ENCODE measurements at regions of chr15 and their contacts with region 1.

Region 1: GRCh38 chr15:70863450-70864218 is 9.7 kb upstream of the LARP6 start:
- DNase-seq: no peak
- H3K4me3 ChIP-seq: no peak overlapping the region
- H3K27ac ChIP-seq: no peak overlapping the region
- H3K4me1 ChIP-seq: peaks cover 10% of the 10 kb centered on the region
- H3K27me3 ChIP-seq: no peaks in the 10 kb centered on the region
- CTCF ChIP-seq: no peak
- EP300 ChIP-seq: no peak
- POLR2A ChIP-seq: no peak

Region 2: DNA sequence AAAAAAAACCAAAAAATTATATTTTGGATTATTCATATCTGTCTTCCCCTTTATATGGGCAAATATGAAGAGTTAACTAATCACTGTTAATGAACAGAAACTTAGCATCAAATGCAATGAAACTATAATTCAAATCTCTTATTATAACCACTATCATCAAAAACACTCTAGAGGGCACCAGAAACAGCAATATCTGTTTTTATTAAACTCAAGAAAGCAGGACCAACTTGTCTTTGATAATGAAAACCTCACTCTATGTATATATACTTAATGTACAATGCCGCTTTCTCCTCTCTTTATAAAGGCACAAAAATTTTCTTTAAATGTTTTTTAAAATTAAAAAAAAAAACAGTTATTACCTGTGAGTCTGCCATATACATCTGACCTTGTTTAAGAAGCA is 193.0 kb before region 1 on chr15:
- intact Hi-C with region 1: no loop called
- DNase-seq: no peak
- H3K4me3 ChIP-seq: no peak overlapping the region
- H3K27ac ChIP-seq: no peak overlapping the region
- H3K4me1 ChIP-seq: peaks cover 3% of the 10 kb centered on the region
- H3K27me3 ChIP-seq: no peaks in the 10 kb centered on the region
- CTCF ChIP-seq: no peak
- EP300 ChIP-seq: no peak
- POLR2A ChIP-seq: no peak

Region 3: GRCh38 chr15:70729164-70729563 is 134.5 kb before region 1 on chr15:
- intact Hi-C with region 1: no loop called
- DNase-seq: no peak
- H3K4me3 ChIP-seq: no peak overlapping the region
- H3K27ac ChIP-seq: no peak overlapping the region
- H3K4me1 ChIP-seq: peaks cover 2% of the 10 kb centered on the region
- H3K27me3 ChIP-seq: no peaks in the 10 kb centered on the region
- CTCF ChIP-seq: no peak
- EP300 ChIP-seq: no peak
- POLR2A ChIP-seq: no peak

Region 4: GRCh38 chr15:70826634-70827033 is 37.0 kb before region 1 on chr15:
- intact Hi-C with region 1: loop called in 1 of 4 experiments (anchors 5 kb)
- DNase-seq: peak in 1 of 5 donors; percentile 46
- H3K4me3 ChIP-seq: no peak overlapping the region
- H3K27ac ChIP-seq: no peak overlapping the region
- H3K4me1 ChIP-seq: peaks cover 3% of the 10 kb centered on the region
- H3K27me3 ChIP-seq: no peaks in the 10 kb centered on the region
- CTCF ChIP-seq: no peak
- EP300 ChIP-seq: no peak
- POLR2A ChIP-seq: no peak

Region 5: DNA sequence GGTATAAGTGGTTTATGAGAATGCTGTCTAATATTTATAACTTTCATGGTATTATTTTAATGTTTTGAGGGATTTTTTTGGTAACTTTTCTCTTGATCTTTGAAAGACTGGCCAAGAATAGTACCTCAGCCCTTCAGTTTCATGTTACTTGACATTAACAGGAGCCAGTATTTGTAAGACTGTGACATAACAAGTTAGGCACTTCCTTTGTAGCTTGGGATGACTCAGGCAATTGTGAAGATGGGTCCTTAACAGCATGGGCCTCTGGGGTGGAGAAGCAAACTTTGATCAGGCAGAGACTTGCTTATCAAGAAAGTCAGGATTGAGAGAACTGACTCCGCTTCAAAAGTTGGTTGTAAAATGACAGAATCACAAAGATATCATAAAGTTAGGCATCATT is 38.5 kb after region 1 on chr15:
- intact Hi-C with region 1: no loop called
- DNase-seq: no peak
- H3K4me3 ChIP-seq: no peak overlapping the region
- H3K27ac ChIP-seq: no peak overlapping the region
- H3K4me1 ChIP-seq: no peaks in the 10 kb centered on the region
- H3K27me3 ChIP-seq: no peaks in the 10 kb centered on the region
- CTCF ChIP-seq: no peak
- EP300 ChIP-seq: no peak
- POLR2A ChIP-seq: no peak